IMR-90 (cell line): ENCODE measurements at regions of chr2 and their contacts with region 1.

Region 1: DNA sequence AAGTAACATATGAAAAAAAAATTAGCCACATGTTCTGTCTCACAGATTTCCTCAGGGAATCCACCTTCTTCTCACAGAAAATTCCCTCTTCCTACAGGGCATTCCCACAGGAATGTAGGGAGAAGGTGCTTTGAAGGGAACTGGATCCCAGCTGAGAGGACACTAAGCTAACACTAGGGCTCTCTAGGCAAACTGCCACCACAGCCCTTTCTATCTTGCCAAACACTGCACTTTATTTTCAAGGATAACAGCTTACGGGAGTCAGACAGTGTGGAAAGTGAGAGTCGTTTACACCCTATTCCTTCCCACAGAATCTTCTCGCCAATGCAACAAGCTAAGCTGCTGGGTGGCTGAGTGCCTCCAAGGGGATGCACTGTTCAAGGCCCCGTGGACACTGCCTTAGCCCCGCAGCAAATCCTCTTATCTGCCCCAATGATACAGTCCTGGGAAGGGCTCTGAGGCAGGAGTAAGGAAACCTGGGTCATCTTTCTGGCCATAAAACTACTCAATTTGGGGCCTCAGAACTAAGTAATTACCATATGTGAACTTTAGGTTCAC is 76.9 kb downstream of the CCDC93 start:
- DNase-seq: no peak
- ATAC-seq: no peak
- H3K4me3 ChIP-seq: no peak overlapping the region
- H3K27ac ChIP-seq: no peak overlapping the region
- H3K4me1 ChIP-seq: peaks cover 5% of the 10 kb centered on the region; the same call in 1 of the 2 replicates
- H3K27me3 ChIP-seq: no peaks in the 10 kb centered on the region
- CTCF ChIP-seq: no peak
- POLR2A ChIP-seq: no peak
- RAD21 ChIP-seq: no peak

Region 2: GRCh38 chr2:117820444-117820843 is 116.5 kb before region 1 on chr2:
- CTCF ChIA-PET with region 1: no interaction called
- POLR2A ChIA-PET with region 1: no interaction called
- dilution Hi-C with region 1: no loop called
- in situ Hi-C with region 1: loop called (anchors 10 kb)
- intact Hi-C with region 1: loop called (anchors 5 kb)
- DNase-seq: no peak
- ATAC-seq: no peak
- H3K4me3 ChIP-seq: no peak overlapping the region
- H3K27ac ChIP-seq: no peak overlapping the region
- H3K4me1 ChIP-seq: peaks cover 1% of the 10 kb centered on the region; the same call in 1 of the 2 replicates
- H3K27me3 ChIP-seq: no peaks in the 10 kb centered on the region
- CTCF ChIP-seq: no peak
- POLR2A ChIP-seq: no peak
- RAD21 ChIP-seq: no peak